ENCODE measurements at regions of chr2 and their contacts with region 1.

Region 1: DNA sequence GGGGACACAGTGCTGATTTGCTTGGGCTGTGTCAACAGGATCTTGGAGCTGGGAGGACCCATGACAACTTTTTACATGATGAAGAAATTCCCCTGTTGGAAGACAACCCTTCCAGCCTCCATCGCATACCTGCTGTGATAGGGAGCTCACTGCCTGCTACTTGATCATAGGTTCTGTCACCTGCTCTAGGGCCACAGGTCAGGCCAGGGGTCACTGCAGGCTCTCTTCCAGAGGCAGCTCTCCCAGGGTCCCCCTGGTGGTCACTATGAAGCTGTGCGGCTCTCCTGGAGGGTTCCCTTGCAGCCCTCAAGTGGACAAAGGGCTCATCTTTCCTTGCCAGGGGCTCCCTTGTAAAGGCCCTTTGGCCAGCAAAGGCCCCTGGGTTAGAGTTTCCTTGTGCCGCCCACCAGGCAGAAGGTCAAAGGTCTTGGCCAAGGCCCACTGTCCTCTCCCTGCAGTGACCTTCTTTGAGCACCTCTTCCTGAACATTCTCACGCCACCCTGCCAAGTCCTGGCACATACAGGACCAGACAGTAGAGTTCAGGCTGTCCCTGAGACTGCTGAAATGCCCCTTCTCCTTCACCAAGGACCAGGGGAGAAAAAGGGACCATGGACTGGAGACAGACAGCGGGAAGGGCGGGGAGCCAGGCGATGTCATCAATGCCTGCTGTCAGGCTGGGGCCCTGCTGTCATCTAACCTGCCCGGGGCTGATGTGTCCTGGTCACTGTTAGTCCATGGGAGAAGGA is 345.1 kb downstream of the DYSF start:
- DNase-seq: no peak
- H3K4me3 ChIP-seq: no peak overlapping the region
- H3K27ac ChIP-seq: no peak overlapping the region
- H3K4me1 ChIP-seq: peaks cover 34% of the 10 kb centered on the region
- H3K27me3 ChIP-seq: no peaks in the 10 kb centered on the region
- CTCF ChIP-seq: peak; percentile 92

Region 2: GRCh38 chr2:71545572-71546274 is 252.7 kb before region 1 on chr2:
- CTCF ChIA-PET with region 1: no interaction called
- POLR2A ChIA-PET with region 1: no interaction called
- intact Hi-C with region 1: loop called (anchors 5 kb)
- DNase-seq: peak; percentile 31 to 48
- H3K4me3 ChIP-seq: no peak overlapping the region
- H3K27ac ChIP-seq: no peak overlapping the region
- H3K4me1 ChIP-seq: no peaks in the 10 kb centered on the region
- H3K27me3 ChIP-seq: no peaks in the 10 kb centered on the region
- CTCF ChIP-seq: peak; percentile 87

Region 3: GRCh38 chr2:71609958-71610357 is 188.5 kb before region 1 on chr2:
- CTCF ChIA-PET with region 1: interaction called, 5 read pairs
- POLR2A ChIA-PET with region 1: no interaction called
- intact Hi-C with region 1: loop called (anchors 5 kb)
- DNase-seq: peak in 1 of 2 experiments; percentile 52
- H3K4me3 ChIP-seq: no peak overlapping the region
- H3K27ac ChIP-seq: no peak overlapping the region
- H3K4me1 ChIP-seq: peaks cover 14% of the 10 kb centered on the region
- H3K27me3 ChIP-seq: no peaks in the 10 kb centered on the region
- CTCF ChIP-seq: peak; percentile 63

Region 4: GRCh38 chr2:71691747-71692501 is 106.5 kb before region 1 on chr2:
- CTCF ChIA-PET with region 1: interaction called, 10 read pairs
- POLR2A ChIA-PET with region 1: no interaction called
- intact Hi-C with region 1: loop called (anchors 10 kb)
- DNase-seq: no peak
- H3K4me3 ChIP-seq: no peak overlapping the region
- H3K27ac ChIP-seq: no peak overlapping the region
- H3K4me1 ChIP-seq: 0 out of 2 replicates have a peak, but pooled peaks cover 2% of the 10 kb centered on the region
- H3K27me3 ChIP-seq: no peaks in the 10 kb centered on the region
- CTCF ChIP-seq: no peak

Region 5: GRCh38 chr2:71716781-71717624 is 81.4 kb before region 1 on chr2:
- CTCF ChIA-PET with region 1: interaction called, 13 read pairs
- POLR2A ChIA-PET with region 1: no interaction called
- intact Hi-C with region 1: no loop called
- DNase-seq: peak; percentile 71 to 95
- H3K4me3 ChIP-seq: no peak overlapping the region
- H3K27ac ChIP-seq: peak overlapping the region; percentile 33; the same call in 1 of the 2 replicates
- H3K4me1 ChIP-seq: peaks cover 62% of the 10 kb centered on the region
- H3K27me3 ChIP-seq: no peaks in the 10 kb centered on the region
- CTCF ChIP-seq: no peak

Region 6: DNA sequence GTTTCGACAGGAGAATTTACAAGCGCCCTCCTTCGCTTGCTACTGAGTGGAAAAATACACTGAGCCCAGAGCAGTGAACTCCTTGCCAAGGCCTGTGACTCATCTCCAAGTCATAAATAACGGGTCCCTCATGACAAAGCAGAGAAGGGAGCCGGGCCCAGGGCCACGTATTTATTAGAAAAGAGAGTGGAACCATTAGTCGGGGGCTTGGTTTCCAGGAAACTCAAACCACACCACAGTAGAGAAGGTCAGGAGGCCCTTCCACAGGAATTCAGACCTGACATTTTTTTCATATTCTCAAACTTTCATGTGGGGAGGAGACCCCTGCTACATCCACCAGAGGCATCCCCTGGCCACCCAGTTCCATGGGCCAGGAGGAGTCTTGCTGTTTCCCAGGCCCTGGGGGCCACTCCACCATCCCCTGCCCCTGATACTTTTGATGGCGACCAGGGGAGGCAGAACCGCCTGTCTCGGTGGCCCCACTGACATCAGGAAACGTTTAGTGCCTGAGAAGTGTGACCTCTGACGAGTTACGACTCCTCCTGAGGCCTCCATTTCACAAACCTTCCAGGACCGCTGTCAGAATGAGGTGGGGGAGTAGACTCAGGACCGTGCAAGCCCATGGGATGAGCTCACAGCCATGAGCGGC is 55.4 kb before region 1 on chr2:
- CTCF ChIA-PET with region 1: interaction called, 4 read pairs
- POLR2A ChIA-PET with region 1: interaction called, 4 read pairs
- intact Hi-C with region 1: loop called (anchors 5 kb)
- DNase-seq: peak; percentile 58 to 90
- H3K4me3 ChIP-seq: no peak overlapping the region
- H3K27ac ChIP-seq: no peak overlapping the region
- H3K4me1 ChIP-seq: peaks cover 74% of the 10 kb centered on the region
- H3K27me3 ChIP-seq: no peaks in the 10 kb centered on the region
- CTCF ChIP-seq: no peak